Activated T-helper 2 cell treated with anti-CD3 and anti-CD28 coated beads, Interferon-gamma antibody, Interleukin-2, Interleukin-4, amounts not matched to agents 10 μg/mL and 5 μg/mL and 100 μg/mL, durations not matched to agents 14 hours and 24 hours and 36 hours (primary cell): ENCODE measurements at regions of chr14 and their contacts with region 1.

Region 1: DNA sequence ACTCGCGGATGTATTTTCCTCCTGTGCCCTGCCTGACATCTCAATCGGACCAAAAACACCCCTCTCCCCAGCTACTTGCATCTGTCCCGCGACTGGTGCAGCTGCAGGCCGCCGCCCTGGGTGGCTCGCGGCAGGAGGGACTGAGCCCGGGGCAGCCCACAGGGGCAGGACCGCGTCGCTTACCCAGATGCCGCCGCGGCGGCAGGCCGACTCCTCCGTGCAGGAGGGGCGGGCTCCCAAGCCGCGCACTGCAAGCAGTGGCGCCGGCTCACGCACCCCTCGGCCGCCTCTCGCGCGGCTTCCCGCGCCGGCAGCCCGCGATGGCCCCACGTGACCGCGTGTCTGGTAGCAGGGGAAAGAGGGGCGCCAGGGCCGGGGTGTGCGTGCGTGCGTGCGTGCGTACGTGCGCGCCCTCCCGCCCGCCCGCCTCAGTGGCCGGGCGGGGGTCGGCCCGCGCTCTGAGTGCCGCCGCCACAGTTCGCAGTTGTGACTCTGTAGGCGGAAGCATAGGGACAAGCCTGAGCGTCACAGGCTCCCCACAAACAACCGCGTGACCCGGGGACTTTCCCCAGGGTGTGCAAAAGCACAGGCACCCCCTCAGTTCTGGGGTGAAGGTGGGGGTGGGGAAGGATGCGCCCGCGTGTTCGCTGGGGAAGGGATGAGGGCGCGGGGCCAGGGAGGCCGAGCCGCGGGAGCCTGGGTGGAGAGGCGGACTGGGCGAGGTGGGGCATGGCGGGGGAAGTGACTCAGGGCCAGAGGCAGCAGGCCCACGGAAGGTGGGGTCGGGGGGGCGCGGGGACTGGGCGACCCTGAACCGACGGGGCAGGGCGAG is at the start of gene ZBTB25:
- DNase-seq: peak; percentile 95
- H3K4me3 Mint-ChIP-seq: peak within 1 kb of the TSS; percentile 95
- H3K27ac Mint-ChIP-seq: peak within 1 kb of the TSS; percentile 99
- H3K4me1 Mint-ChIP-seq: peaks cover 57% of the 10 kb centered on the region
- H3K27me3 Mint-ChIP-seq: no peaks in the 10 kb centered on the region
- total RNA-seq, gene ZBTB25: 24.7 and 24.9 TPM in 2 replicates

Region 2: GRCh38 chr14:63641473-63642228 is 862.0 kb before region 1 on chr14 and contains the start of gene WDR89:
- intact Hi-C with region 1: loop called (anchors 5 kb)
- DNase-seq: peak; percentile 97
- H3K4me3 Mint-ChIP-seq: peak within 1 kb of the TSS; percentile 92
- H3K27ac Mint-ChIP-seq: peak within 1 kb of the TSS; percentile 98
- H3K4me1 Mint-ChIP-seq: peaks cover 22% of the 10 kb centered on the region
- H3K27me3 Mint-ChIP-seq: no peaks in the 10 kb centered on the region
- total RNA-seq, gene WDR89: 25.5 and 25.9 TPM in 2 replicates

Region 3: GRCh38 chr14:64338616-64339316 is 164.9 kb before region 1 on chr14:
- intact Hi-C with region 1: loop called (anchors 1 kb)
- DNase-seq: peak; percentile 89
- H3K4me3 Mint-ChIP-seq: peak overlapping the region; percentile 91
- H3K27ac Mint-ChIP-seq: peak overlapping the region; percentile 80
- H3K4me1 Mint-ChIP-seq: peaks cover 23% of the 10 kb centered on the region
- H3K27me3 Mint-ChIP-seq: no peaks in the 10 kb centered on the region

Region 4: DNA sequence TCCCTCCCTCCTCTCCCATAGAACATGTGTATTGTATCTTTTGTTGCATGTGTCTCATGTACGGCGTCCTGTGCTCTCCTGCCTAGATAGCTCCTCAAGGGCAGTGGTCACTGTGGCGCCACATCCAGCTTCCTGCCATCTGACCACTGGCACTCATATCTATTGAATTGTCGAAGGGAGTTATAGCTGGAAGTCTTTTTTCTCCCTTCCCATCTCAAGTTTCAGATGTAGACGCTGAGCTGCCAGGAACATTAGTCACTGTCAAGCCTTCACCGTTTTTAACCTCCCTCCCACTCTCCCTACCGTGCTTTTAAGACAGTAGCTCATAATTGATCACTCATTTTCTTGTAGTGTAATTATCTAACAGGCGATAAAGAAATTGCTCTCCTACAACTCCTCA is 82.5 kb before region 1 on chr14:
- intact Hi-C with region 1: loop called (anchors 2 kb)
- DNase-seq: no peak
- H3K4me3 Mint-ChIP-seq: no peak overlapping the region
- H3K27ac Mint-ChIP-seq: peak overlapping the region; percentile 72
- H3K4me1 Mint-ChIP-seq: peaks cover 52% of the 10 kb centered on the region
- H3K27me3 Mint-ChIP-seq: no peaks in the 10 kb centered on the region

Region 5: GRCh38 chr14:64636208-64636979 is 132.7 kb after region 1 on chr14:
- intact Hi-C with region 1: loop called (anchors 10 kb)
- DNase-seq: peak; percentile 56
- H3K4me3 Mint-ChIP-seq: no peak overlapping the region
- H3K27ac Mint-ChIP-seq: no peak overlapping the region
- H3K4me1 Mint-ChIP-seq: peaks cover 3% of the 10 kb centered on the region
- H3K27me3 Mint-ChIP-seq: peaks cover 10% of the 10 kb centered on the region